ENCODE measurements at regions of chr12 and their contacts with region 1.

Region 1: DNA sequence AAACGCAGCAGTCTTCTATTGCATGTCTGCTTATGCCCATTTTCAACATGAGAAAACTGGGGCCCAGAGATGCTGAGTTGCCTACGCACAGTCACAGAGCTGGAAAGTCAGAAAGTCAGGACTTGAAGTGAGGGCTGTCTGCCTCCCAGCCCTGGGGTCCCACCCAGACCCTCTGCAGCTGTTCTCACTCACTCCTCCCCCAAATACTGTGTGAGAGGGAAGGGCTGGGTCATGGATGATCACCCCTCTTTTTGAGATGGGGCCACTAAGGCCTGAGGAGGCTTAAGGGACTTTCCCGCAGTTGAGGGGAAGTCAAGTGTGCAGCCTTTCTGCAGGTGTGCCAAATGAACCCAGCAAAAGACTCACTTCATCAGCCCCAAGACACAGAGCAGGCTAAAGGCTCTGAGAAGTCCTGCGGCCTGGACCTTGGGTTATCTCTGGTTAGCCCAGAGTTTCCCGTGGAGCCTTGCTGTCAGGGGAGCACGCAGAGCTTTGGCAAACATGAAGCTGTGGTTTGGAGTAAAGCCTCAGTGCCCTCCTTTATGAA is 18.7 kb downstream of the DTX1 start:
- DNase-seq: no peak
- H3K4me3 ChIP-seq: no peak overlapping the region
- H3K27ac ChIP-seq: no peak overlapping the region
- H3K4me1 ChIP-seq: no peaks in the 10 kb centered on the region
- H3K27me3 ChIP-seq: peaks cover 11 to 14% of the 10 kb centered on the region in 2 experiments
- CTCF ChIP-seq: no peak
- POLR2A ChIP-seq: no peak

Region 2: DNA sequence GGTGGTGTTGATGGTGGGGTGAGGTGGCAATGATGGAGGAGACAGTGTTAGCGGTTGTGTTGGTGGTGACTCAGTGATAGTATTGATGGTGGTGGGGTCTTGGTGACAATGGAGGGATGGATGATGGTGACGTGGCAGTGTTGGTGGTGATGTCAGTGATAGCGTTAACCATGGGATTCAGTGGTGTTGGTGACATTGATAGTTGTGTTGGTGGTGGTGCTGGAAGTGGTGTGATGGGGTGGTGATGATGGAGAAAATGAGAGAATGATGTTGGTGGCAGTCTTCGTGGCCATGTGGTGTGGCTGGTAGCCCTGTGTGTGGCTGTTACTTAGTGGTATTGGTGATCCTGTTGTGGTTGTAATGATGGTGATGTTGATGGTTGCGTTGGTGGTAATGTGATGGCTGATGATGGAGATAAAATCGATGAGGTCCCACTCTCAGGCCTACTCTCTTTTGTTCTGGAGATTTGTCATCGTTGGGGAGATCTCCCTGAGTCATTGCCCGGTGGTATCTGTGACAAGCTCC is 16.1 kb before region 1 on chr12:
- CTCF ChIA-PET with region 1: no interaction called
- POLR2A ChIA-PET with region 1: no interaction called
- dilution Hi-C with region 1: no loop called
- intact Hi-C with region 1: loop called (anchors 1 kb)
- DNase-seq: no peak
- H3K4me3 ChIP-seq: no peak overlapping the region
- H3K27ac ChIP-seq: no peak overlapping the region
- H3K4me1 ChIP-seq: no peaks in the 10 kb centered on the region
- H3K27me3 ChIP-seq: peaks cover 26 to 27% of the 10 kb centered on the region in 2 experiments
- CTCF ChIP-seq: no peak
- POLR2A ChIP-seq: no peak

Measured in endothelial cell of umbilical vein (primary cell).